Endothelial cell of umbilical vein (primary cell): ENCODE measurements at regions of chr15 and their contacts with region 1.

Region 1: GRCh38 chr15:99282121-99282520 is 30.8 kb downstream of the LRRC28 start:
- DNase-seq: peak; percentile 12
- H3K4me3 ChIP-seq: no peak overlapping the region
- H3K27ac ChIP-seq: no peak overlapping the region
- H3K4me1 ChIP-seq: peaks cover 15% of the 10 kb centered on the region
- H3K27me3 ChIP-seq: no peaks in the 10 kb centered on the region
- CTCF ChIP-seq: no peak
- POLR2A ChIP-seq: no peak

Region 2: DNA sequence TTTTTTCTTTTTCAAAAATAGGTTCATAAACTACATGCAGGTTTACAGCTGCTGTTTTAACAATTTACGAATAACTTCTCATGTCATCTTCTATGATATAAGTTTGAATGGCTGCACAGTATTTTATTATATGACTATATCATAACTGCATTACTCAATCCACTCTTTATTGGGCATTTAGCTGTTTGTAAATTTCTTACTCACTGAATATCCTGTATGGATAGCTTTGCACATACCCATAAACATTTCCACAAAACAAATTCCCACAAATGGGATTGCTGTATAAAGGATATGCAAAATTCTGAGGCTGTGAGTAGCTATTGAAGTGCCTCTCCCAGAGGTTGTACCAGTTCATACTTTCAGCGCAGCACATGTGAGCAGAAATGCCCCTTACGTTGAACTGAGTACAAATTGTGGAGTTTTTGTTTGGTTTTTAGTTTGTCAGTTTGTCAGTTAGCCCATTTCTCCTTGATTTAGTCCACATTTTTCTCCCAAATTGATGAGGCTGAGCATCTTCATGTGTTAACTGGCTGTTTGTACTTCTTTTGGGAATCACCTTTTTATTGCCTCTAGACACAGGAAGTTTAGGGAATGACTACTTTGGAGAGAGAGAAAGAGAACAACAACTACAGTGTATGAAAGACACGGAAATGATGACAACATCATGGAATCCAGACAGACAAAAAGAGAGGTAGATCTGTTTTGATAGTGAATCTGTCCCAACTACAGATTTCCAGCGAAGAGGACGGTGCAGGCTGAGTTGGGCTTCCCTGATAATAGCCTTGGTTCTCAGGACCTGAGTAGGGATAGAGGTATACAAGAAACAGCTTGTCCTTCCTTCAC is 57.5 kb before region 1 on chr15:
- CTCF ChIA-PET with region 1: no interaction called
- POLR2A ChIA-PET with region 1: no interaction called
- dilution Hi-C with region 1: no loop called
- intact Hi-C with region 1: no loop called
- DNase-seq: no peak
- H3K4me3 ChIP-seq: no peak overlapping the region
- H3K27ac ChIP-seq: no peak overlapping the region
- H3K4me1 ChIP-seq: no peaks in the 10 kb centered on the region
- H3K27me3 ChIP-seq: no peaks in the 10 kb centered on the region
- CTCF ChIP-seq: no peak
- POLR2A ChIP-seq: no peak

Region 3: GRCh38 chr15:99296386-99296785 is 14.3 kb after region 1 on chr15:
- CTCF ChIA-PET with region 1: interaction called, 10 read pairs
- POLR2A ChIA-PET with region 1: no interaction called
- dilution Hi-C with region 1: no loop called
- intact Hi-C with region 1: no loop called
- DNase-seq: no peak
- H3K4me3 ChIP-seq: no peak overlapping the region
- H3K27ac ChIP-seq: no peak overlapping the region
- H3K4me1 ChIP-seq: no peaks in the 10 kb centered on the region
- H3K27me3 ChIP-seq: no peaks in the 10 kb centered on the region
- CTCF ChIP-seq: no peak
- POLR2A ChIP-seq: no peak

Region 4: GRCh38 chr15:99361541-99362185 is 79.5 kb after region 1 on chr15:
- CTCF ChIA-PET with region 1: no interaction called
- POLR2A ChIA-PET with region 1: no interaction called
- dilution Hi-C with region 1: no loop called
- intact Hi-C with region 1: loop called (anchors 1 kb)
- DNase-seq: peak; percentile 18
- H3K4me3 ChIP-seq: no peak overlapping the region
- H3K27ac ChIP-seq: no peak overlapping the region
- H3K4me1 ChIP-seq: no peaks in the 10 kb centered on the region
- H3K27me3 ChIP-seq: no peaks in the 10 kb centered on the region
- CTCF ChIP-seq: peak; percentile 48
- POLR2A ChIP-seq: no peak

Region 5: GRCh38 chr15:99733268-99734039 is 451.3 kb after region 1 on chr15 and contains the start of gene LYSMD4:
- CTCF ChIA-PET with region 1: interaction called, 4 read pairs
- POLR2A ChIA-PET with region 1: no interaction called
- dilution Hi-C with region 1: no loop called
- intact Hi-C with region 1: loop called (anchors 1 kb)
- DNase-seq: peak; percentile 93
- H3K4me3 ChIP-seq: peak within 1 kb of the TSS; percentile 63 to 79 (median 71)
- H3K27ac ChIP-seq: peak within 1 kb of the TSS; percentile 21
- H3K4me1 ChIP-seq: peaks cover 5% of the 10 kb centered on the region
- H3K27me3 ChIP-seq: no peaks in the 10 kb centered on the region
- CTCF ChIP-seq: no peak
- POLR2A ChIP-seq: no peak
- total RNA-seq, gene LYSMD4: 7.0 and 8.4 TPM in 2 replicates

Region 6: DNA sequence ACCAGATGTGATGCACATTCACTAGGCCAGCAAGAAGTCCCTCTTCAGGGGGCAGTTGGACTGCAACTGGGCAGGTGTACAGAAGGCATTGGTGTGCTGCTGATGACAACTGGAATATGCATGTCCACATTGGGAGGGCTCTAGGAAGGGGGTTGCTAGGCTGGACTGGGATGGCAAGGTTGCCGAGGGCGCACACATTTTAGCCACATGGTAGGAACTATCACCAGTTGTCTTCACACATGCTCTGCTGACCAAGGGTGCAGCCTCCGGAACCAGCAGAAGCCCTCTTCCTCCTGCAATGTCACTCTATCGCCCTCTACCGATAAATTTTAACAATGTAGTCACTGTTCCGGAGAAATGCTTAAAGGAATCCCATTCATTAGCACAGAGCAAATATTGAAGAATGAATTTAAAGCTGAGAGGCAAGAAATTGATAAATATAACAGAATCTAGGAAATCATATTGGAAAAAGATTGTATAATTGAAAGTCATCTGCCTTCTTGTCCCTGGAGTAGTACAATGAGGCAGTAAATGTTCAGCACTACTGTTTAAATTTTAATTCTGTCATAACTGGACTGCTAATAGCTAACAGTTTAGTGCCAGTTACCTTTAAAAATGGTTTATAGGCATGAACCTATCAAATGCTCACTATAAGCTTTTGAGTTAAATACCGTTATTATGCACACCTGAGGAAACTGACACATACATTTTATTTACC is 473.7 kb after region 1 on chr15:
- CTCF ChIA-PET with region 1: interaction called, 17 read pairs
- POLR2A ChIA-PET with region 1: no interaction called
- dilution Hi-C with region 1: no loop called
- intact Hi-C with region 1: loop called (anchors 2 kb)
- DNase-seq: peak; percentile 73
- H3K4me3 ChIP-seq: no peak overlapping the region
- H3K27ac ChIP-seq: no peak overlapping the region
- H3K4me1 ChIP-seq: no peaks in the 10 kb centered on the region
- H3K27me3 ChIP-seq: no peaks in the 10 kb centered on the region
- CTCF ChIP-seq: peak; percentile 67 to 68
- POLR2A ChIP-seq: no peak